ENCODE measurements at regions of chr10 and their contacts with region 1.

Region 1: DNA sequence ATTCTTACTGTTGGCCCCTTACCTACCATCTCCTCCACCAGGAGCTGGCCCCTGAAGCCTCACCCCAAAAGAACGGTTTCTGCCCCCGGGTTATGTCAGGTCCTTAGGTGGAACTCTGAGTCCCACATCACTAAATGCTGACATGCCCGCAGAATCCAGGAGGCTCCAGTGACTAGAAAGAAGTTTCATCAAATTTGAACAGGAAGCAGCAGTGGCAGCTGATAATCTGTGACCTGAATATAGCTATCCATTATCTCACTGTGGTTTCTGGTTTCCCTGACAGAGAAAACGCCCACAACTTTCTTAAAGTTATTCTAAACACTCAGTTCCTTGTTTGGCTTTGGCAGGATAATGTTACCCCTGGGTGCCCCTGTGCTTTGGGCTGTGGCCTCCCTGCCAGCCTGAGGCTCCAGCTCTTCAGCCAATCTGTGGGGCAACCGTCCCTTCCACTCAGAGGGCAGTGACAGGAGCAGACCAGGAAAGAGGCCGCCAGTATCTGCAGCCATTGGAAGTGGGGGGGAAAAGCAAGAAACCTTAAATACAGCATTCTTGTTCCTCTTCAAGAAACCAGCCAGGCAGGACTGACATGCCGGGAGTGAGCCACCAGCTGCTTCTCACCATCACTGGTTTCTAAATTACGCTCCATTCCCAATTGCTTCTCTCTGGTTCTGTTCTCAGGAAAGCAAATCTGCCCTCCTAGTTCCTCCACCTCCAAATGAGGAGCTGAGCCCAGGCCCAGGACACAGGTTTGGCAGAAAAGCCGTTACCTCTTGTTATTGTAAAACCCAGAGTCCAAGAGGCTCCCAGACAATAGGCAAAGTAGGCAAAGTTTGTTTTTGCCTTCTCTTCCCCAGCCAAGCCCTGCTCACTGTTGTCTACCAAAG is 41.2 kb upstream of the VCL start:
- DNase-seq: peak; percentile 69
- CTCF ChIP-seq: no peak

Region 2: GRCh38 chr10:73899423-73899822 is 57.3 kb before region 1 on chr10:
- CTCF ChIA-PET with region 1: interaction called, 10 read pairs
- POLR2A ChIA-PET with region 1: no interaction called
- DNase-seq: no peak
- CTCF ChIP-seq: no peak

Region 3: DNA sequence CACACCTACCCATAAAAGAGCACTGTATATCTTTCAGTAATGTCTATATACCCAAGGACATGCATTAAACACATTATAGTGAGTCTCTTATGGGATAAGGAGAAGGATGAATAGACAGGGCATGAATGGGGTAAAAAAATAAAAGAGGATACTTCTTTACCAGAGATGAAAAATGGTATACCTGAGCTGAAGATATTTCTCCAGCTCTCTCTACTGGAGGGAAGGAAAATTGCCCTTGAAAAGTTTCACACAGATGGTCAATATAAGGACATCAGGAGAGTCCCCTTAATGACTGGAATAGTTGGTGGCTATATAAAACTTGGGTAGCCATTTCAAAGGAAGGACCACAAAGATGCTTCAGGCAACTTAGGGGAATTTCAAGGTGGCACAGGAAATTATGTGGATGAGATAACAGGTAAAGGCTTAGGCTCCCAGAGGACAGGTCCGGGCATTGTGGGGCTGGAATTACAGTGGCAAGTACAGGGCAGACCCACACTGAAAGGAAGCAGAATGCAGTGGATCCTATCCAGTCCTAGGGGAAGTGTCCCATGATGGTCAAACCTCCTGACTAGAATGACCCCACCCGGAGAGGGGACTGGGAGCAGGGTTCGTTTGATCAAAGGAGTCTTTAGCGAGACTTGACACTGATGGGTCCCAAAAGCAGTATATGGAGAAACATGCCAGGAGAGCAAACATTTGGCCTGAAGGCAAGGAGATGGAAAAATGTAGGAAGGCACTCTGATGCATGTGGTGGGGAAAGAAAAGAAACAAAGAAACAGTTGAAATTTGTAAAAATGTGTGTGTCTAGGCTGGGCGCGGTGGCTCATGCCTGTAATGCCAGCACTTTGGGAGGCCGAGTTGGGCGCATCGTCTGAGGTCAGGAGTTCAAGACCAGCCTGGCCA is 10.2 kb before region 1 on chr10:
- CTCF ChIA-PET with region 1: interaction called, 47 read pairs
- POLR2A ChIA-PET with region 1: no interaction called
- DNase-seq: no peak
- CTCF ChIP-seq: no peak

Region 4: GRCh38 chr10:74165530-74165901 is 208.8 kb after region 1 on chr10:
- CTCF ChIA-PET with region 1: no interaction called
- POLR2A ChIA-PET with region 1: no interaction called
- DNase-seq: no peak
- CTCF ChIP-seq: no peak

Measured in GM10248 (cell line).